Dendritic cell treated with granulocyte-macrophage colony-stimulating factor and Interleukin-4, amounts not matched to agents 40 ng/mL and 50 ng/mL, for 4 days (primary cell): ENCODE measurements at regions of chr11 and their contacts with region 1.

Region 1: GRCh38 chr11:58958500-58958899 is 19.2 kb downstream of the GLYATL1 start:
- H3K4me3 Mint-ChIP-seq: no peak overlapping the region
- H3K27ac Mint-ChIP-seq: no peak overlapping the region
- H3K4me1 Mint-ChIP-seq: no peaks in the 10 kb centered on the region
- H3K27me3 Mint-ChIP-seq: no peaks in the 10 kb centered on the region

Region 2: DNA sequence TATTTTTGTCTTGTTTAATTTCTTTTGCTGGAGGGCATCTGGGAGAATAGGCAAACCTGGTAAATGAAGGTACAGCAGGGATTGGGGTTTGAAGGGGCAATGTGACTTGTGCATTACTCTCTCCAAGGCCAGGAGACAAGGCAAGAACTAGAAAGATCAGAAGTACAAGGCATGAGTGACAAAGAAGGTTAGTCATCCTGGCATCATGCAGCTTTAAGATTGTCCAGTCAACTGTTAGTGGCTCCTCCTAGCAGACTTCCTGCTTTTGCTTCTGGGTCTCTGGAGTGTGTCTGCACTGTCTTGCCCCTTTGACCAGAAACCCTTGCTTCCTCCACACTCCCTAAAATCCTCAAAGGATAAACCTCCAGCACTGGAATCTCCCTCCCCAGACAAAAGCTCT is 46.4 kb before region 1 on chr11:
- intact Hi-C with region 1: no loop called
- H3K4me3 Mint-ChIP-seq: no peak overlapping the region
- H3K27ac Mint-ChIP-seq: no peak overlapping the region
- H3K4me1 Mint-ChIP-seq: peaks cover 36% of the 10 kb centered on the region
- H3K27me3 Mint-ChIP-seq: no peaks in the 10 kb centered on the region

Region 3: DNA sequence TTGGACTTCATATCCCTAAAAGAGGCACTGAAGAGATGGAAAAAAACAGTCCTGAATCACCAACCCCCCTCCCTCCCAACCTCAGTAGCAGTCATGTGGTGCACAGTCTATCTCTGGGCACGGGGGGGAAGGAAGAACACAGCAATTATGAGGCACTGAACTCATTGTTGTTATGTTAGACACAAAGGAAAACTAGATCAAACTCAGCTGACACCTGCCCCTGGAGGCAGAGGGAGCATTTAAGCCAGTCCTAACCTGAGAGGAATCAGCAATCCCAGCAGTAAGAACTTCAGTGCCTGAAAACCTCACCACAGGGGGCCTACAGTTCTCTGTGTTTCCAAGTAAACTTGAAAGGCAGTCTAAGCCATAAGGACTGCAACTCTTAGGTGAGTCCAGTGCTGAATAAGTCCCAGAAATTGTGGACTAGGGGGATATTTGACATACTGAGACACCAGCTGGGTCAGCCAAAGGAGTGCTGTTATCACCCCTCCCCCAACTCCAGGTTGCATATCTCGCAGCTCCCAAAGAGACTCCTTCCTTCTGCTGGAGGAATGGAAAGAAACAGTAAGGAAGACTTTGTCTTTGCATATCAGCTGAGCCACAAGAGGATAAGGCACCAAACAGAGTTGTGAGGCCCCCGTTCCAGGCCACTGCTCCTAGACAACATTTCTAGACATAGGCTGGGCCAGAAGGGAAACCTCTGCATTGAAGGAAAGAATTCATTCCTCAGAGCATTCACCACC is 53.3 kb after region 1 on chr11:
- intact Hi-C with region 1: no loop called
- H3K4me3 Mint-ChIP-seq: no peak overlapping the region
- H3K27ac Mint-ChIP-seq: peak overlapping the region; percentile 15
- H3K4me1 Mint-ChIP-seq: peaks cover 51% of the 10 kb centered on the region
- H3K27me3 Mint-ChIP-seq: no peaks in the 10 kb centered on the region

Region 4: DNA sequence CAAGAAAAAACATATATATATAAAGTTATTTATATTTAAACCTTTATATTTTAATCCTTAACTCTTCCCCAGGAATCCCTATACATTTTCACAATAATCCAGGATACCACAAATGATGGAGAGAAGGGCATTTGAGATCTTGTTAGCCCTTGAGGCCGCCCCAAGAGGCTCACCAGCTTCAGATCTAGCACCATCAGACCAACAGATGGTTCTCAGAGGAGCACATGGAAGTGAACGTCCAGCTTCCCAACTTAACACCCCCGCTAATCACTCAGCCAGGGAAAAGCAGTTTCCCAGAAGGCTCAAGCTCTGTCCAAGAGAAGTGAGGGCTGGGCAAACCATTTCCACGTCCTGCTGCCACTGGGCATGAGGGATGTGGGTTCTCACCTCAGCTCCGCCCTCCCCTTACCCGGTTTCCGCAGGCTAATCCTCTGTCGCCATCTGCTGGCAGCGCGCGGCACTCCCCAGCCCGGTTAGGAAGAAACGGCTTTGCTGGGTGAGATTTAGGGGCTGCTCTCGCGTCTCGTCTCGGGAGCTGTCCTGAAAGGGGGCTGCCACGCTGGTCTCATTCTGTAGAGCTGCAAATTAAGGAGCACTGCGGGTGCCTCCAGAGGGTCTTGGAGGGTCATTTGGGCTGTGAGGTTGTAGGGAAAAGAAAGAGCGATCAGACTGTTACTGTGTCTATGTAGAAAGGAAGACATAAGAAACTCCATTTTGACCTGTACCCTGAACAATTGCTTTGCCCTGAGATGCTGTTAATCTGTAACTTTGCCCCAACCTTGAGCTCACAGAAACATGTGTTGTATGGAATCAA is 177.4 kb after region 1 on chr11:
- intact Hi-C with region 1: loop called (anchors 2 kb)
- H3K4me3 Mint-ChIP-seq: peak overlapping the region; percentile 66
- H3K27ac Mint-ChIP-seq: no peak overlapping the region
- H3K4me1 Mint-ChIP-seq: peaks cover 6% of the 10 kb centered on the region
- H3K27me3 Mint-ChIP-seq: no peaks in the 10 kb centered on the region

Region 5: GRCh38 chr11:59158206-59159068 is 199.9 kb after region 1 on chr11:
- intact Hi-C with region 1: loop called (anchors 1 kb)
- H3K4me3 Mint-ChIP-seq: no peak overlapping the region
- H3K27ac Mint-ChIP-seq: peak overlapping the region; percentile 18
- H3K4me1 Mint-ChIP-seq: peaks cover 12% of the 10 kb centered on the region
- H3K27me3 Mint-ChIP-seq: peaks cover 2% of the 10 kb centered on the region